Common myeloid progenitor, CD34-positive (primary cell): ENCODE measurements at regions of chr4 and their contacts with region 1.

Region 1: DNA sequence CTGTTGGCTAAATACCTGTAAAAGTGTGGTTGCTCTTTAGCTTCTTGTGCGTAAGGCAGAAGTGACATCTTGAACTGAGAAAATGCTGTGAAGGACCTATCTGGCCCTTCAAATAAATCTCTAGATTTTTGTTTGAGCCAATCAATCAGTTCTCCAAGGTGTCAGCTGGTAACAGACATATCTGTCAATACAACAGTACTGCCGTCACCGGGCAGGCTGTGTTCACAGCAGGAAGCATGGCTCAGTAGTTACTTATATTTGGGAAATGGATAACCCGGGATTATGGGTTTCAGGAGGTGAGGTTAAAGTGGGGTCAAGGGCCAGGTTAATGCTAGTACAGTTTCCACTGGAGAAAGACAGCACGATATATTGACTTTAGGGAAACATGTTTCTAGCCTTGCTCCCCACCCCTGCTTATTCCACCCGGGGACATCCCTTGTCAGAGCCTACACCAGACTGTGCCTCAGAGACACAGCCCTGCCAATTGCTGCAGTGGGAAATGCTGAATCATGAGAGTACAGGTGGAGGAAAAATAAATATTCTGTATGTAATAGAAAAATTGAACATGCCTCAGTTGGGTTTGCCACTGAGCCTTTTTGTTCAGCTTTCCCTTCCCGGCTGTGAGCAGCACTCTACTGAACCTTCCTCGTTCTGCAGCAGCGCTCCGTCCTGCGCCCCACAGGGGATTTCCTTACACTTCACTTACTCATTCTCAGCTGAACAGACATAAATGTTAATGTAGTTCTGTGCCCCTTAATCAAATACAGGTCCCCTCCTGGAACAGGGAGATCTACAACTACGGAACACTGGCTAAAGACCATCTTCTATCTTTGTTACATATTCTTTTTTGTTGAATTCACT is 121.1 kb downstream of the MGST2 start:
- DNase-seq: peak in 2 of 3 donors; percentile 56 to 63
- H3K4me3 ChIP-seq: peak overlapping the region in 1 of 7 experiments; percentile 34
- H3K27ac ChIP-seq: no peak overlapping the region
- H3K4me1 ChIP-seq: peaks cover 2 to 30% (median 11%) of the 10 kb centered on the region in 4 experiments
- H3K27me3 ChIP-seq: no peaks in the 10 kb centered on the region

Region 2: GRCh38 chr4:139774759-139775487 is 11.8 kb before region 1 on chr4:
- CTCF ChIA-PET with region 1: interaction called, 11 read pairs
- POLR2A ChIA-PET with region 1: no interaction called
- DNase-seq: no peak
- H3K4me3 ChIP-seq: no peak overlapping the region
- H3K27ac ChIP-seq: no peak overlapping the region
- H3K4me1 ChIP-seq: peaks cover 9 to 10% (median 9%) of the 10 kb centered on the region in 4 experiments
- H3K27me3 ChIP-seq: no peaks in the 10 kb centered on the region